ENCODE measurements at regions of chr18 and their contacts with region 1.

Region 1: DNA sequence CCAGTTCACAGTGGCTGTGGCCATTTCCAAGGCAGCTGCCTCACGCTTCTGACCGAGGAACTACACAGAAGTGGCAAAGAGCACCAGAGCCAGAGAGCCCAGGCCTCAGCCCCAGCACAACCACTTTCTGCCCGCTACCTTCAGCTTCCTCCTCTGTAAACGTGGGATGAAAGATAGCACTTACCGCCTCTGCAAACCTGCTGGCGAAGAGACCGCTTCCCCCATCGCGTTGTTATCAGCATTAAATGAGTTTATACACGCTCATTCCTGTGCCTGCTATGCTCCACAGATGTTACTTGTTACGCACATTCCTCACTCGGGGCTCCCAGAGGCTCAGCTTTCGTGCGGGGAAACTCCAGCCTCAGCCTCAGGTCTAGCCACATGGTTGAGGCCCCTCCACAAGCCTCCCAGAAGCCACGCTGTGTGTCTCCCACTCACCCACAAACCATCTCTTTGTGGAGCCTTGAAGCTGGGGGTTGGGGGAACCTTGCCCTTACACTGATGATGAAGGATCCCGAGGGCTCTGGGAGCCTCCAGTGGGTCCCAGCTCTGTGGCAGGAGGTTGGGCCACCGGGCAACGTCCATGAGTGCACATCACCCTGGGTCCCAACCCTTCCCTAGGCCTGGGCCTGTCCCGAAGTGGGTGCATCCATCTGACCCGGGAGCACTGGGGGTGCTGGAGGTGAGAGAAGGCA is 63.3 kb upstream of the SMAD7 start:
- DNase-seq: peak in 1 of 2 donors; percentile 64
- ATAC-seq: no peak
- H3K4me3 ChIP-seq: no peak overlapping the region
- H3K27ac ChIP-seq: peak overlapping the region in 1 of 2 donors; percentile 39
- H3K4me1 ChIP-seq: no peaks in the 10 kb centered on the region
- H3K27me3 ChIP-seq: no peaks in the 10 kb centered on the region

Region 2: GRCh38 chr18:48959921-48960920 is 53.9 kb before region 1 on chr18:
- intact Hi-C with region 1: no loop called
- DNase-seq: no peak
- ATAC-seq: no peak
- H3K4me3 ChIP-seq: no peak overlapping the region
- H3K27ac ChIP-seq: no peak overlapping the region
- H3K4me1 ChIP-seq: peaks cover 6 to 7% of the 10 kb centered on the region in 2 donors
- H3K27me3 ChIP-seq: no peaks in the 10 kb centered on the region

Region 3: GRCh38 chr18:48997985-48998831 is 15.9 kb before region 1 on chr18:
- intact Hi-C with region 1: loop called in 1 of 2 experiments (anchors 2 kb)
- DNase-seq: peak; percentile 91 to 93
- ATAC-seq: peak; percentile 75
- H3K4me3 ChIP-seq: no peak overlapping the region
- H3K27ac ChIP-seq: peak overlapping the region; percentile 20 to 78
- H3K4me1 ChIP-seq: no peaks in the 10 kb centered on the region
- H3K27me3 ChIP-seq: no peaks in the 10 kb centered on the region